Posterior vena cava (tissue), 2 donors: ENCODE measurements at regions of chr5 and their contacts with region 1.

Region 1: DNA sequence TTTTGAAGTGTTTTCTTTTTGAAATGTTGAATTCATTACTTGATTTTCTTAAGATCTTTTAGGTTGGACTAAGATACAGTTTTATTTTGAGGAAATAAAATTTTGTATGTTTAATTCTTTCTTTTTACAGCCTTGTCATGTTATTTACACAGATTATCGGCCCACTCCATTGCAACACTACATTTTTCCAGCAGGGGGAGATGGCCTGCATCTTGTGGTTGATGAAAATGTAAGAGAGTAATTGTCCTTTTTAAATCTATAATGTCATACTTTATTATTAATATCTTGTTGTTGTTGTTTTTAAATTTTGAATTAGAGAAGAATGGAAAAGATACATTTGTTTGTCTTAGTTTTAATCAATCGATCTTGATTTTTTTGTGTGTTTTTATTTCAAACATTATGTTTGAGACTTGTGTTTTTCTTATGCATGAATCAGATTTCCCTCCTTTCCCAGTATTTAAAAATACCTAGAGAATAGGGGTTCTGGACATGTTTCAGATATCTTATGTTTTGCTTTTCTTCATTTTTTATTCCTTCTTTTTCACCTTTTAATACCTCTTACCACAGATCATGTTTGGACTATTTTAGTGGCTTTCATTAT is 36.7 kb downstream of the MTREX start:
- DNase-seq: no peak

Region 2: DNA sequence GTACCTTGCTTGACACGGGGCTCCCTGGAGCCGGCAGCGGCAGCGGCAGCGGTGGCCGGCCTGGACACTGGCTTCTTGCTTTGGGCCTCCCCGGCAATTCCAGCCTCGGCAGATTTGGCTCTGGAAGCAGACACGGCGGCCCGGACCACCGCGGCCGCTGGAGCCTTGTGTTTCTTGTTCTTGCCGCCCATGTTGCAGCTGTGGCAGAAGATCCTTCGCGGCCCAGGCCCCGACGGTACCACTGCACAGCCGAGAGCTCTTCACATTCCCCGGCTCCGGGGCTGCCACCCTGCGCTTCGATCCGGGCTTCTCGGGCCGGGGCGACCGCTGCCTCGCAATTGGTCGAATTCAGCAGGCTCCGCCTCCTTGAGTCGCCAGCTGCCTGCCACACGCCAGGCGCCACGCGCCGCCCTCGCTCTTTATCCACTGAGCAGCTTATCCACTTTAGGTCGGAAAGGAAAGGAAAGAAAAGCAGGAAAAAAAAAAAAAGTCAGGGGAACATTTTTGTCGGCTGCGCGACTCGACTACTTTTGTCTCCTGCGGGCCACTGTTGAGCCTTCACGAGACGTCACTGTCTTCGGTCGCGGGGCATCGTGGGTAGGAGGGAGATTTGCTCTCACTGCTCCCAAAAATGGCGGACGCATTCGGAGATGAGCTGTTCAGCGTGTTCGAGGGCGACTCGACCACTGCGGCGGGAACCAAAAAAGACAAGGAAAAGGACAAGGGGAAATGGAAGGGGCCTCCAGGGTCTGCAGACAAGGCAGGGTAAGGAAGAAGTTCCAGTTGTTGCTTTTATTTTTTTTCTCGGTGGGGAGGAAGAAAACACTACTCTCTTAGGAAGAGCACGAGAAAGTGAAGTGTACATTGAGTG is 36.9 kb before region 1 on chr5 and contains the starts of genes DHX29 and MTREX:
- intact Hi-C with region 1: no loop called
- DNase-seq: peak; percentile 97
- total RNA-seq, gene DHX29: 23.1 to 34.0 TPM
- total RNA-seq, gene MTREX: 56.6 to 60.1 TPM

Region 3: DNA sequence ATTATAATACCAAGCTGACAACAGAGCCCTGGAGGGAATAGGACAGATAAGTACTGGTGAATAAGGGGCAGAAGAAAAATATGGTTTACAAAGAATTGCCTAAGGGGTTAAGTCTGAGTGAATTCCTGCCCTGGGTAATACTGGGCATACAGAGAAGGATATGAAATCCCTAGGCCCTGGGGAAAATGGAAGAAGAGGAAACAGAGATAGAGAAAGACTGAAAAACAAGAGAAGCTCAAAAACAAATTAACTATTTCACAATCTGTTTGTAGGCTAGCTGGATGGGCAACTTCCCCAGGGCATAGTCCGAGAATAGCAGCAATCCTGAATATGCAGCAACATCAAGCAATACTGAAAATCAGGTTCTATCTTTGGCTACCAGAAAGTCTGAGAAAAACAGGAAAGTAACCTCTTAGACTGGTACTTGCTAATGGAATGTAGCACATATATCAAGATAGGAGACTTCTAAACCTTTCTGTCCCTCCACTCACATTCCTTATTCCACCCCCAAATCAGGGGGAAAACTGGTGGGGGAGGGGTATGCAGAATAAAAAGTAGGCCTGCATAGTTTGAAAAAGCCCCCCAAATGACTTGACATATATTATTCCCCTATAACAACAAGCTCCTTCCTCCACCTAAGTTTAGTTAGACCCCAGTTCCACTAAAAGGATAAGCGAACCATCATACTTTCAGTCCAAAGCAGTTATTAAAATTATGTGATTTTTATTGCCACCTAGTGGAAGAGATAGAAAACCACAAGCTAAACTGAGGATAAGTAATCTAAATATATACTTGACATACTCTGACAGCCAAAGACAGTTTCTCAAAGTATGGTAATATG is 347.0 kb after region 1 on chr5:
- intact Hi-C with region 1: loop called in 1 of 2 experiments (anchors 10 kb)
- DNase-seq: no peak

Region 4: GRCh38 chr5:56244627-56245026 is 900.1 kb after region 1 on chr5:
- intact Hi-C with region 1: no loop called
- DNase-seq: no peak